ENCODE measurements at regions of chr5 and their contacts with region 1.

Region 1: GRCh38 chr5:55982957-55983381 is 11.8 kb downstream of the IL6ST start:
- DNase-seq: no peak
- H3K4me3 Mint-ChIP-seq: no peak overlapping the region
- H3K27ac Mint-ChIP-seq: no peak overlapping the region
- H3K4me1 Mint-ChIP-seq: no peaks in the 10 kb centered on the region
- H3K27me3 Mint-ChIP-seq: no peaks in the 10 kb centered on the region
- CTCF ChIP-seq: no peak

Region 2: GRCh38 chr5:56123531-56124243 is 140.7 kb after region 1 on chr5:
- CTCF ChIA-PET with region 1: no interaction called
- intact Hi-C with region 1: loop called (anchors 5 kb)
- DNase-seq: peak; percentile 48
- H3K4me3 Mint-ChIP-seq: no peak overlapping the region
- H3K27ac Mint-ChIP-seq: peak overlapping the region; percentile 76
- H3K4me1 Mint-ChIP-seq: peaks cover 26% of the 10 kb centered on the region
- H3K27me3 Mint-ChIP-seq: no peaks in the 10 kb centered on the region
- CTCF ChIP-seq: no peak

Region 3: DNA sequence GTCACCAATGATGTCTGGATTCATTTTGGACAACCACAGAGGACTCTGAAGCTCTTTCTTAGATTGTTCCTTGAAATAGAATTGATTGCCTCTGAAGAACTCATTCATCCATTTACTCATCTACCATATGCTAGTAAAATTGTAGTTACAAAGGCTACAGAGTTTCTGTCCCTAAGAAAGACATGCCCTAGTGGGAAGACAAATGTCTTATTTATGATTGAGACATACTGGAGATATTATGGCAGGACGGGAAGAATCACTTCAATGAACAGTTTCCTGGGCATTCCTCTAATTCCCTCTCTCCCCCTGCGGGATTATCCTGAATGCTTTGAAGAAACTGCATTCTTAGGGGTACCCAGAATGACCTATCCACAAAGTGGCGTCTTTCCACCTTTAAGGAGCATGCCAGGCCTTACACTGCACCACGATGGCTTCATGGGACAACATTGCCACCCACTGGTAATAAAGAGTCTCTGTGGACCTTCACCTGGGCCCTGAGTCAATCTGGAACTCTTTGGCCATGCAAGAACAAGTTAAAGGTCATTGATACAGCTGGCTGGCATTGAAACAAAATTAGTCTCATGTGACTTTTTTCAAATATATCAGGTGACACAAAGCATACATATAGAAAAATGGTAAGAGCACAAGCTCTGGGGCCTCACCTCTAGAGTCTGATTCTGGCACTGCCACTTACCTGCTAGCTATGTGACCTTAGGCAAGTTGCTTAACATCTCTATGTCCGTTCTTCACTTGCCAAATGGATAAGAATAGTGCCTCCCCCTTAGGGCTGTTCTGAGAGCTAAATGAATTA is 218.1 kb after region 1 on chr5:
- CTCF ChIA-PET with region 1: no interaction called
- intact Hi-C with region 1: loop called (anchors 2 kb)
- DNase-seq: peak; percentile 67
- H3K4me3 Mint-ChIP-seq: no peak overlapping the region
- H3K27ac Mint-ChIP-seq: no peak overlapping the region
- H3K4me1 Mint-ChIP-seq: peaks cover 9% of the 10 kb centered on the region
- H3K27me3 Mint-ChIP-seq: no peaks in the 10 kb centered on the region
- CTCF ChIP-seq: peak; percentile 84

Measured in Calu3 (cell line).